Activated B cell treated with CpG ODN at 0.5 μM for 24 hours (primary cell): ENCODE measurements at regions of chrX and their contacts with region 1.

Region 1: GRCh38 chrX:129726307-129727111 is 12.3 kb upstream of the XPNPEP2 start:
- DNase-seq: no peak
- ATAC-seq: no peak
- H3K4me3 Mint-ChIP-seq: no peak overlapping the region
- H3K27ac Mint-ChIP-seq: no peak overlapping the region
- H3K4me1 Mint-ChIP-seq: peaks cover 15% of the 10 kb centered on the region
- H3K27me3 Mint-ChIP-seq: no peaks in the 10 kb centered on the region
- CTCF ChIP-seq: no peak

Region 2: DNA sequence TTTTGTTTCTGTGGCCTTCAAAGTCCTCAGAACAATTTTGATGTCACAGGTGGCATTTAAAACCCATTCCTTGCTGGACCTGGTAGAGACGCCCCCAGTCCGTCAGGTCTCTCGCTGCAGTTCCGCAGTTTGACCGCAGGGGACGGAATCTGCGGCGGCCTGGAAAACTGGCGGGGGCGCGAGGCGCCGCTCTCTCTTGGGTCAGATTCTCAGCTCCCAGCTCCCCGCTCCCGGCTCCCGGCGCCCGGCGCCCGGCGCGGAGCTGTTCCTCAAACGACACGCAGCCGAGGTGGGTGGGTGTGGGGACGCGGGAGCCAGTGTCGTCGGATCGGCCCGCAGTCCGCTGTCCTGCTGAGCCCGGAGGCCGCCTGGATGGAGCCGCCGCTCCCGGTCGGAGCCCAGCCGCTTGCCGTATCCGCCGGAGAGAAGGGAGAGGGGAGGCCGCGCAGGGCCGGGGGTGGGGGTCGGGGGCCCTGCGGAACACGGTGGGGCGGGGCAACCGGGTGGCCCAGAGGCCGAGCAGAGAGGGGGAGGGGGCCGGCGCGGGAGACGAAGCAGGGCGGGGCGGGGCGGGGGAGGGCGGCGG is 186.3 kb before region 1 on chrX and contains the start of gene OCRL:
- CTCF ChIA-PET with region 1: no interaction called
- POLR2A ChIA-PET with region 1: no interaction called
- intact Hi-C with region 1: no loop called
- DNase-seq: peak; percentile 37
- ATAC-seq: peak; percentile 89
- H3K4me3 Mint-ChIP-seq: peak within 1 kb of the TSS; percentile 80
- H3K27ac Mint-ChIP-seq: no peak within 1 kb of the TSS
- H3K4me1 Mint-ChIP-seq: peaks cover 5% of the 10 kb centered on the region
- H3K27me3 Mint-ChIP-seq: peaks cover 3% of the 10 kb centered on the region
- CTCF ChIP-seq: no peak
- total RNA-seq, gene OCRL: 5.4 and 7.5 TPM in 2 replicates

Region 3: GRCh38 chrX:129626020-129626419 is 100.5 kb before region 1 on chrX:
- CTCF ChIA-PET with region 1: no interaction called
- POLR2A ChIA-PET with region 1: no interaction called
- intact Hi-C with region 1: no loop called
- DNase-seq: no peak
- ATAC-seq: no peak
- H3K4me3 Mint-ChIP-seq: no peak overlapping the region
- H3K27ac Mint-ChIP-seq: no peak overlapping the region
- H3K4me1 Mint-ChIP-seq: no peaks in the 10 kb centered on the region
- H3K27me3 Mint-ChIP-seq: no peaks in the 10 kb centered on the region
- CTCF ChIP-seq: no peak

Region 4: GRCh38 chrX:129637217-129638109 is 89.0 kb before region 1 on chrX:
- CTCF ChIA-PET with region 1: interaction called, 13 read pairs
- POLR2A ChIA-PET with region 1: no interaction called
- intact Hi-C with region 1: loop called (anchors 1 kb)
- DNase-seq: peak; percentile 58
- ATAC-seq: peak; percentile 67
- H3K4me3 Mint-ChIP-seq: no peak overlapping the region
- H3K27ac Mint-ChIP-seq: no peak overlapping the region
- H3K4me1 Mint-ChIP-seq: no peaks in the 10 kb centered on the region
- H3K27me3 Mint-ChIP-seq: no peaks in the 10 kb centered on the region
- CTCF ChIP-seq: no peak

Region 5: DNA sequence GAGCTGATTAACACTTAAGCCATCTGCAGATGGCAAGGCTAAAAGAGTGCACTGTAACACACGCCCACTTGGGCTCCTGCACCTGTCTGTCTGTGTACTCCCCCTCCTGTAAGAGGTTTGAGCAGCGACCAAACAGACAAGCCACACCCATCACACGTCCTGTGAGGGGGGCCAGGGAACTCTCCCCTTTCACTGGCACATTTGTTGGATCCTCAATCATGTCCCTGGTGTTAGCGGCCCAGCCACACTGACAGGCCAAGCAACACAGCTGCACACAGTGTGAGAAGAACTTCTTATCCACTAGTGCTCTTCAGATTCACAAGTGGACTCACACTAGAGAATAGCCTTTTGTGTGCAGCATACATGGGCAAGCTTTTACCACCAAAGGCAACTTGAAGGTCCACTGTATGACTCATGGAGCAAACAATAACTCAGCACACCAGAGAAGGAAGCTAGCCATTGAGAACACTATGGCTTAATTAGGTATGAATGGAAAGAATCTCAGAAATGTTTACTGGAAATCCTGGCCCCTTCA is 150.3 kb after region 1 on chrX:
- CTCF ChIA-PET with region 1: no interaction called
- POLR2A ChIA-PET with region 1: no interaction called
- intact Hi-C with region 1: no loop called
- DNase-seq: no peak
- ATAC-seq: no peak
- H3K4me3 Mint-ChIP-seq: no peak overlapping the region
- H3K27ac Mint-ChIP-seq: no peak overlapping the region
- H3K4me1 Mint-ChIP-seq: no peaks in the 10 kb centered on the region
- H3K27me3 Mint-ChIP-seq: no peaks in the 10 kb centered on the region
- CTCF ChIP-seq: no peak